IMR-90 (cell line): ENCODE measurements at regions of chr2 and their contacts with region 1.

Region 1: GRCh38 chr2:164847981-164848741 is 6.5 kb upstream of the COBLL1 start:
- DNase-seq: no peak
- ATAC-seq: no peak
- H3K4me3 ChIP-seq: no peak overlapping the region
- H3K27ac ChIP-seq: no peak overlapping the region
- H3K4me1 ChIP-seq: no peaks in the 10 kb centered on the region
- H3K27me3 ChIP-seq: peaks cover 3% of the 10 kb centered on the region; the same call in 1 of the 2 replicates
- CTCF ChIP-seq: no peak
- POLR2A ChIP-seq: no peak
- RAD21 ChIP-seq: no peak

Region 2: DNA sequence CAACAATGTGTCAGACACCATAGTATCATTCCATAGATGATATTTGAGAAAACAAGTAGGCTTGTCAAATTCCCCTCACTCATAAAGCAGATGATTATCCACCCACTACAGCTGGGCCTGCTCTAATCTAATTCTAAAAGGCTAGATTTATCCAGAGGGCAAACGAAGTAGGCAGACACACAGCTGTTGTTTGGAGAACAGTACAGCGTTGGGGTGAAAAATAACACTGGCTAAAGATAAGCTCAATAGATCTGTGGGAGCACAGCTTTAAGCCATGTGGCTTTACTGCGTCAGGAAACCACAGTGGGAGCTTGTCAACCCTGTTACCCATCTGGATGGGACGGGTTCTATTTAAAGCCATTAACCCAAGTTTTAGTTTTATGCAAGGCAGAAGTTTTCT is 42.4 kb after region 1 on chr2:
- CTCF ChIA-PET with region 1: no interaction called
- POLR2A ChIA-PET with region 1: no interaction called
- dilution Hi-C with region 1: no loop called
- in situ Hi-C with region 1: no loop called
- intact Hi-C with region 1: loop called (anchors 2 kb)
- DNase-seq: peak; percentile 35
- ATAC-seq: no peak
- H3K4me3 ChIP-seq: no peak overlapping the region
- H3K27ac ChIP-seq: no peak overlapping the region
- H3K4me1 ChIP-seq: no peaks in the 10 kb centered on the region
- H3K27me3 ChIP-seq: no peaks in the 10 kb centered on the region
- CTCF ChIP-seq: no peak
- POLR2A ChIP-seq: no peak
- RAD21 ChIP-seq: no peak

Region 3: DNA sequence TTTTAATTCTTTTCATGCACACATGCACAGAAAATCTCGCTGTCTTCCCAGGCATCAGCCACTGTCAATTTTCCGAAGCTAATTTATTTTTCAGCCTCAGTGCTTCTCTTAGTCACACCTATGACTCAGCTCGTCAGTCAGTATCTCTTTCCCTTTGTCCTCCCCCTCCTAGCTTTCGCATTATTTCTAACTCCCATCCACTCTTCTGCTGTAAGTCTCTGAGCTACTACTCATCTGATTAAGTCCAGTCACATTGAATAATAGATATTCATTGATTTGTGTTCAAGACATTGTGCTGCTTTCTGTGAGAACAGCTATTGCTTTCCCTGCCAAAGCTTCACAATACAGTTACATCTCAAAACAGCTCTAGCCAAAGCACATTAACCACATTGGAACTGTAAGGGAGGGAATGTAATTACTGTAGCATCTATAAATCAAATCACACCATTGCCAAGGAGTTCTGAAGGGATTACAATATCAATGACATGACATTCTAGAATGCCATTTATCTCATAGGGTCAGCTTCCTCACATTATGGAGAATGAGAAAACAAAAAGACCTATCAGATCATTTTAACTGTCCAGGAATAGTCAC is 266.3 kb after region 1 on chr2:
- CTCF ChIA-PET with region 1: no interaction called
- POLR2A ChIA-PET with region 1: no interaction called
- dilution Hi-C with region 1: no loop called
- in situ Hi-C with region 1: no loop called
- intact Hi-C with region 1: no loop called
- DNase-seq: peak; percentile 67
- ATAC-seq: peak; percentile 81
- H3K4me3 ChIP-seq: no peak overlapping the region
- H3K27ac ChIP-seq: no peak overlapping the region
- H3K4me1 ChIP-seq: no peaks in the 10 kb centered on the region
- H3K27me3 ChIP-seq: no peaks in the 10 kb centered on the region
- CTCF ChIP-seq: no peak
- POLR2A ChIP-seq: no peak
- RAD21 ChIP-seq: no peak